Activated T-helper 2 cell treated with anti-CD3 and anti-CD28 coated beads, Interferon-gamma antibody, Interleukin-2, Interleukin-4, amounts not matched to agents 10 μg/mL and 5 μg/mL and 100 μg/mL, durations not matched to agents 14 hours and 24 hours and 36 hours (primary cell): ENCODE measurements at regions of chr1 and their contacts with region 1.

Region 1: DNA sequence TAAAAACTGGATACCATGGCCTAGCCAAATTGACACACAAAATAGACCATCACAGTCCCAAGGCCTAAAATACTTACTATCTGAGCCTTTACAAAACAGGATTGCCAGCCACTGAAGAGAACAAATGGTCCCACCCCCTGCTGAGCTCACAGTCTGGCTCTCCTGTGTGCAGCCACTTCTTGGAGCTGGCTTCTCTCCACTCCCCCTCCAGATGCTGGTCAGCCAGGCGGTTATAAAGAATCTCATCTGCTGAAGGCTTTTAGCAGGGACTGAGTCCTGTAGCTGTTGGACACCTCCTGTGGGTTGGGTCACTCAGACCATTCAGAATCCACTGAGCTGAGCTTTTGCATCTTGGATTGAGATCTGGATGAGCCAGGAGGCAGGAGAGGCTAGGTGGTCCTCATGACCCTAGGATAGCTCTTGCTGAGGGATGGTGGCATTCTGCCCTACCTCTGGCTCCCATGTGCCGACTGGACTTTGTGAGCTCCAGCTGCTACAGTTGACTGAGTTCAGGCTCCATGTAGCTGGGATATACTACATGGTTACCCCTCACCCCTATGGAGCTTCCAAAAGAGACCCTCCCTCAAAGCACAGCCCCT is 16.1 kb downstream of the OXCT2 start:
- DNase-seq: no peak
- H3K4me3 Mint-ChIP-seq: no peak overlapping the region
- H3K27ac Mint-ChIP-seq: no peak overlapping the region
- H3K4me1 Mint-ChIP-seq: no peaks in the 10 kb centered on the region
- H3K27me3 Mint-ChIP-seq: no peaks in the 10 kb centered on the region

Region 2: GRCh38 chr1:39711104-39711965 is 43.7 kb before region 1 on chr1:
- intact Hi-C with region 1: no loop called
- DNase-seq: peak; percentile 3
- H3K4me3 Mint-ChIP-seq: no peak overlapping the region
- H3K27ac Mint-ChIP-seq: no peak overlapping the region
- H3K4me1 Mint-ChIP-seq: no peaks in the 10 kb centered on the region
- H3K27me3 Mint-ChIP-seq: peaks cover 27% of the 10 kb centered on the region

Region 3: GRCh38 chr1:39789571-39790110 is 34.6 kb after region 1 on chr1:
- intact Hi-C with region 1: loop called (anchors 5 kb)
- DNase-seq: no peak
- H3K4me3 Mint-ChIP-seq: peak overlapping the region; percentile 75
- H3K27ac Mint-ChIP-seq: peak overlapping the region; percentile 58
- H3K4me1 Mint-ChIP-seq: peaks cover 12% of the 10 kb centered on the region
- H3K27me3 Mint-ChIP-seq: peaks cover 29% of the 10 kb centered on the region